Caco-2 (cell line): ENCODE measurements at regions of chr20 and their contacts with region 1.

Region 1: GRCh38 chr20:8043687-8044282 is 24.2 kb upstream of the TMX4 start:
- DNase-seq: peak in 1 of 2 experiments; percentile 80
- H3K4me3 ChIP-seq: no peak overlapping the region
- H3K4me3 Mint-ChIP-seq: no peak overlapping the region
- H3K27ac Mint-ChIP-seq: no peak overlapping the region
- H3K4me1 ChIP-seq: peaks cover 13% of the 10 kb centered on the region
- H3K4me1 Mint-ChIP-seq: peaks cover 35% of the 10 kb centered on the region
- H3K27me3 ChIP-seq: no peaks in the 10 kb centered on the region
- H3K27me3 Mint-ChIP-seq: peaks cover 6% of the 10 kb centered on the region
- CTCF ChIP-seq: peak; percentile 52 to 72

Region 2: DNA sequence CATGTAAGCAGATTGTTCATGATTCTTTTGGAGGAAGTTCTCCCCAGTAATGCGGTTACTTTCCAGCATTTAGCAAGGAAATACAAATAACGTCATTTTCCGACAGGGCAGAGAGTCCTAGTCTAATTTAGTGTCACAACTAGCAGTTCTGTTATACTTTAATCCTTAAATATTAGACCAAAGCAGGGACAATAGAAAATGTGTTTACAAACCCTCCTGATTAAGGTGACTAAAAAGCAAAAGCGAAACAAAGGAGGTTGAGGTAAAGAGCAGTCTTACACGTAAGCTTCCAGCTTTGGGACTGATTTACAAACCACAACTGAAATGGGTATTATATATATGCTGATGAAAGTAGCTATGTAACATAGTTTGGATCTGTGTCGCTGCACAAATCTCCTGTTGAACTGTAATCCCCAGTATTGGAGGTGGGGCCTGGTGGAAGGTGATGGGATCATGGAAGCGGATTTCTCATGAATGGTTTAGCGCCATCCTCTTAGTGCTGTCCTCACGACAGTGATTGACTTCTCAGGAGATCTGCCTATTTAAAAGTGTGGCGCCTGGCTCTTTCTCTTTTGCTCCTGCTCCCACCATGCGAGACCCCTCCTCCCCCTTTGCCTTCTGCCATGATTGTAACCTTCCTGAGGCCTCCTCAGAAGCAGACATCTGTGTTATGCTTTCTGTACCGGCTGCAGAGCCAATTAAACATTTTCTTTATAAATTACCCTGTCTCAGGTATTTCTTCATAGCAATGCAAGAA is 170.2 kb after region 1 on chr20:
- CTCF ChIA-PET with region 1: no interaction called
- POLR2A ChIA-PET with region 1: no interaction called
- intact Hi-C with region 1: loop called (anchors 10 kb)
- DNase-seq: no peak
- H3K4me3 ChIP-seq: no peak overlapping the region
- H3K4me3 Mint-ChIP-seq: no peak overlapping the region
- H3K27ac Mint-ChIP-seq: no peak overlapping the region
- H3K4me1 ChIP-seq: peaks cover 42% of the 10 kb centered on the region
- H3K4me1 Mint-ChIP-seq: peaks cover 51% of the 10 kb centered on the region
- H3K27me3 ChIP-seq: no peaks in the 10 kb centered on the region
- H3K27me3 Mint-ChIP-seq: no peaks in the 10 kb centered on the region
- CTCF ChIP-seq: no peak

Region 3: DNA sequence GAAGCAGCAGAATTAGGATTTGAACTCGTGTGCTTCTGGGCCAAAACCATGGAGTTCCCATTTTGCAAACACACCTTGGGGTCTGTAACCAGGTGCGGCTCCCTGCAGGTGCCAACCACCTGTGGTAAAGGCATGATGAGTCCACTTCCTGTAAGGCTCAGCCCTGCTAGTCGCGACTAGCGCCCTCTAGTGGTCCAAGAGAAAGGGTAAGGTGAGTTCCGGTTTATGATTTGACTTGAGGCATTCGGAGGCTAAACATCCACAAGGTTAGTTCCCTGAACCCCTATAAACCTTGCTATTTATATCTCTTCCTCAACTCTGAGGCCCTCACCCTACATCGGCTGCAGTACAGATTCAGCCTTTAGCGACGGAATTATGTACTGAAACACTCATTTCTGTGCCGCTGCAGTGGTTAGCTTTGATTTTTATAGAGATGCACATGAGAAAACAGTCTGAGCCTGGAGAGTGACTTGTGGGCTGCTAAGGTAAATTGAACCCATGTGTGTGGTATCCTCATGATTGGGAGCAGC is 261.7 kb after region 1 on chr20:
- CTCF ChIA-PET with region 1: no interaction called
- POLR2A ChIA-PET with region 1: no interaction called
- intact Hi-C with region 1: loop called (anchors 5 kb)
- DNase-seq: peak; percentile 79 to 80
- H3K4me3 ChIP-seq: no peak overlapping the region
- H3K4me3 Mint-ChIP-seq: no peak overlapping the region
- H3K27ac Mint-ChIP-seq: no peak overlapping the region
- H3K4me1 ChIP-seq: no peaks in the 10 kb centered on the region
- H3K4me1 Mint-ChIP-seq: no peaks in the 10 kb centered on the region
- H3K27me3 ChIP-seq: no peaks in the 10 kb centered on the region
- H3K27me3 Mint-ChIP-seq: no peaks in the 10 kb centered on the region
- CTCF ChIP-seq: peak; percentile 74 to 75

Region 4: DNA sequence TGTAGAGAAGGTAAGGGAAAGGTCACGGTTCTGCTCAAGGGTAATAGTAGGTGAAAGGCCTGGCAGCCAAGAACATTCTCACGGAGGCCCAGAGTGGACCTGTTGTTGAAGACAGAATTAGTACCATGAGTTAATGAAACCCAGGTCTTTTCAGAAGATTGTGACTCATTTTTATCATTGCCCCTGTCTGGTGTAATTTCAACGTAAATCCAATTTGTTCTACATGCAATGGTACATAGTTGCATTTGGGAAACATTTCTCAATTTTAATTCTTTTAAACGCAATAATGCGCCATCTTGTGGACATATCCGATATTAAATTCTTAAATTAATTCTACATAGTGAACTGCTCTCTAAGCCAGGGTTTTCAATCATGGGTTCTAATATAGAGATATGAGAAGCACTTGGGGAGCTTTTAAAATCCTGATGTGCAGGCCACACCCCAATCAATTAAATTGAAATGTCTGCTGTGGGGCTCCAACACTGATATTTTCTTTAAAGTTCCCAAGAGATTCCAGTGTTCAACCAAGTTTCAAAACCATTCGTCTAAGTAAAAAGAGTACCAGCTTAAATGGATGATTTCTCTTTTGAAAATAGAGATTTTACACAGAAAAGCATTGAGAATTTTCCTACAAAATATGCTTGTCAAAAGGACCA is 345.7 kb after region 1 on chr20:
- CTCF ChIA-PET with region 1: interaction called, 5 read pairs
- POLR2A ChIA-PET with region 1: no interaction called
- intact Hi-C with region 1: loop called (anchors 2 kb)
- DNase-seq: peak in 1 of 2 experiments; percentile 27
- H3K4me3 ChIP-seq: no peak overlapping the region
- H3K4me3 Mint-ChIP-seq: no peak overlapping the region
- H3K27ac Mint-ChIP-seq: no peak overlapping the region
- H3K4me1 ChIP-seq: peaks cover 27% of the 10 kb centered on the region
- H3K4me1 Mint-ChIP-seq: no peaks in the 10 kb centered on the region
- H3K27me3 ChIP-seq: no peaks in the 10 kb centered on the region
- H3K27me3 Mint-ChIP-seq: no peaks in the 10 kb centered on the region
- CTCF ChIP-seq: peak; percentile 7 to 56

Region 5: GRCh38 chr20:8454137-8454712 is 410.4 kb after region 1 on chr20:
- CTCF ChIA-PET with region 1: no interaction called
- POLR2A ChIA-PET with region 1: no interaction called
- intact Hi-C with region 1: loop called (anchors 1 kb)
- DNase-seq: peak in 1 of 2 experiments; percentile 33
- H3K4me3 ChIP-seq: no peak overlapping the region
- H3K4me3 Mint-ChIP-seq: no peak overlapping the region
- H3K27ac Mint-ChIP-seq: no peak overlapping the region
- H3K4me1 ChIP-seq: no peaks in the 10 kb centered on the region
- H3K4me1 Mint-ChIP-seq: no peaks in the 10 kb centered on the region
- H3K27me3 ChIP-seq: no peaks in the 10 kb centered on the region
- H3K27me3 Mint-ChIP-seq: no peaks in the 10 kb centered on the region
- CTCF ChIP-seq: peak; percentile 44 to 59

Region 6: GRCh38 chr20:8535403-8536261 is 491.8 kb after region 1 on chr20:
- CTCF ChIA-PET with region 1: no interaction called
- POLR2A ChIA-PET with region 1: no interaction called
- intact Hi-C with region 1: loop called (anchors 1 kb)
- DNase-seq: peak in 1 of 2 experiments; percentile 55
- H3K4me3 ChIP-seq: no peak overlapping the region
- H3K4me3 Mint-ChIP-seq: no peak overlapping the region
- H3K27ac Mint-ChIP-seq: no peak overlapping the region
- H3K4me1 ChIP-seq: no peaks in the 10 kb centered on the region
- H3K4me1 Mint-ChIP-seq: no peaks in the 10 kb centered on the region
- H3K27me3 ChIP-seq: no peaks in the 10 kb centered on the region
- H3K27me3 Mint-ChIP-seq: no peaks in the 10 kb centered on the region
- CTCF ChIP-seq: peak; percentile 75 to 77